Ovary (tissue), 10 donors: ENCODE measurements at regions of chr11 and their contacts with region 1.

Region 1: DNA sequence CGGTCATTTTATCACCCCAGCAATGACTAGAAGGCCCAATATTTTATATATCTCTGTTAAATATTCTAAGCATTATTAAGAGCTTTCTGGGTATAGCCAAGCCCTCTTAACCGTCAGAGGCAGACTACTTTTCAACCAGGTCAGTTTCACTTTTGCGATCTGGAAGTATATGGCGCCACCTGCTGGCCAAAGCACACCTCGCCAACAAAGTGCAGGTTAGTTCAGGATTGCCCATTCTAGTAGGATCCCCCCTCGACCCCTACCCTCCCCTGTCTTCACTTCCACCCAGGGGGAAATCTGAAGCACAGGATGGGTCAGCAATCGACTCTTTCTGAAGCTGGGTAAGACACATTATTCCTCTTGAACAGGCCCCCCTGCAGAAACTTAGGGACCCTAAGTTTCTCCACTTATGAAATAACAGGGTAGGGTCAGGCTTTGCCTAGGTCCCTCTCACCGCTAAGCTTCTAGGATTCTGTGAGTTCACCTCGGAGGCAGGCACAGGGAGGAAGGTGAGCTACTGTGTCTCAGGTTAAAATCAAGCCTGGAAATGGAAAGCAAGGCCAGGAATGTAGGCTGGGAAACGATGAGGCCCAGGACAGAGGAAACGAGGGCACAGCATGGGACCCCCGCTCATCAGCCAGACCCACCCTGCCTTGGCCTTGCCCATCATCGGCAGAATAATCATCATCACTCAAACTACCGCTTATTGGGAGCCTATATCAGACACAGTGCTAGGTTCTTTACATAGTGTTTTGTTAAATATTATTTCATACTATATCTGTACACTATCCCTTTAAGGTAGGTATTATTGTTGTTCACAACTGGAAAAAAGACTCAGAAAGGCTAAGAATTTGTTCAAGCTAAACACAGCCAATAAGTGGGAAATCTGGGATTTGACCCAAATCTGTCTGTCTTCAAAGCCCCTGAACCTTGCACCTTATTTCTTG is 35.6 kb downstream of the KCNJ1 start:
- DNase-seq: peak; percentile 67 to 87 (median 85)
- H3K4me3 ChIP-seq: no peak overlapping the region
- H3K27ac ChIP-seq: no peak overlapping the region
- H3K4me1 ChIP-seq: peaks cover 3% of the 10 kb centered on the region
- H3K27me3 ChIP-seq: no peaks in the 10 kb centered on the region
- CTCF ChIP-seq: peak; percentile 64 to 73 (median 68)
- EP300 ChIP-seq: no peak
- POLR2A ChIP-seq: no peak

Region 2: GRCh38 chr11:128039140-128040021 is 792.1 kb before region 1 on chr11:
- intact Hi-C with region 1: loop called in 1 of 4 experiments (anchors 5 kb)
- DNase-seq: no peak
- H3K4me3 ChIP-seq: no peak overlapping the region
- H3K27ac ChIP-seq: no peak overlapping the region
- H3K4me1 ChIP-seq: no peaks in the 10 kb centered on the region
- H3K27me3 ChIP-seq: no peaks in the 10 kb centered on the region
- CTCF ChIP-seq: no peak
- EP300 ChIP-seq: no peak
- POLR2A ChIP-seq: no peak

Region 3: GRCh38 chr11:128146926-128147605 is 684.4 kb before region 1 on chr11:
- intact Hi-C with region 1: no loop called
- DNase-seq: no peak
- H3K4me3 ChIP-seq: no peak overlapping the region
- H3K27ac ChIP-seq: no peak overlapping the region
- H3K4me1 ChIP-seq: no peaks in the 10 kb centered on the region
- H3K27me3 ChIP-seq: no peaks in the 10 kb centered on the region
- CTCF ChIP-seq: no peak
- EP300 ChIP-seq: no peak
- POLR2A ChIP-seq: no peak

Region 4: GRCh38 chr11:128157423-128158298 is 673.8 kb before region 1 on chr11:
- intact Hi-C with region 1: loop called in 1 of 4 experiments (anchors 5 kb)
- DNase-seq: peak in 2 of 5 donors; percentile 19 to 43
- H3K4me3 ChIP-seq: no peak overlapping the region
- H3K27ac ChIP-seq: no peak overlapping the region
- H3K4me1 ChIP-seq: no peaks in the 10 kb centered on the region
- H3K27me3 ChIP-seq: no peaks in the 10 kb centered on the region
- CTCF ChIP-seq: peak; percentile 64 to 80 (median 64)
- EP300 ChIP-seq: no peak
- POLR2A ChIP-seq: no peak

Region 5: GRCh38 chr11:128165572-128165971 is 665.9 kb before region 1 on chr11:
- intact Hi-C with region 1: loop called in 3 of 4 experiments (anchors 5 to 10 kb)
- DNase-seq: no peak
- H3K4me3 ChIP-seq: no peak overlapping the region
- H3K27ac ChIP-seq: no peak overlapping the region
- H3K4me1 ChIP-seq: no peaks in the 10 kb centered on the region
- H3K27me3 ChIP-seq: no peaks in the 10 kb centered on the region
- CTCF ChIP-seq: no peak
- EP300 ChIP-seq: no peak
- POLR2A ChIP-seq: no peak

Region 6: GRCh38 chr11:128172046-128172878 is 659.2 kb before region 1 on chr11:
- intact Hi-C with region 1: loop called in 3 of 4 experiments (anchors 5 to 10 kb)
- DNase-seq: peak; percentile 68 to 87 (median 84)
- H3K4me3 ChIP-seq: no peak overlapping the region
- H3K27ac ChIP-seq: no peak overlapping the region
- H3K4me1 ChIP-seq: no peaks in the 10 kb centered on the region
- H3K27me3 ChIP-seq: no peaks in the 10 kb centered on the region
- CTCF ChIP-seq: peak; percentile 59 to 79 (median 72)
- EP300 ChIP-seq: no peak
- POLR2A ChIP-seq: no peak

Region 7: DNA sequence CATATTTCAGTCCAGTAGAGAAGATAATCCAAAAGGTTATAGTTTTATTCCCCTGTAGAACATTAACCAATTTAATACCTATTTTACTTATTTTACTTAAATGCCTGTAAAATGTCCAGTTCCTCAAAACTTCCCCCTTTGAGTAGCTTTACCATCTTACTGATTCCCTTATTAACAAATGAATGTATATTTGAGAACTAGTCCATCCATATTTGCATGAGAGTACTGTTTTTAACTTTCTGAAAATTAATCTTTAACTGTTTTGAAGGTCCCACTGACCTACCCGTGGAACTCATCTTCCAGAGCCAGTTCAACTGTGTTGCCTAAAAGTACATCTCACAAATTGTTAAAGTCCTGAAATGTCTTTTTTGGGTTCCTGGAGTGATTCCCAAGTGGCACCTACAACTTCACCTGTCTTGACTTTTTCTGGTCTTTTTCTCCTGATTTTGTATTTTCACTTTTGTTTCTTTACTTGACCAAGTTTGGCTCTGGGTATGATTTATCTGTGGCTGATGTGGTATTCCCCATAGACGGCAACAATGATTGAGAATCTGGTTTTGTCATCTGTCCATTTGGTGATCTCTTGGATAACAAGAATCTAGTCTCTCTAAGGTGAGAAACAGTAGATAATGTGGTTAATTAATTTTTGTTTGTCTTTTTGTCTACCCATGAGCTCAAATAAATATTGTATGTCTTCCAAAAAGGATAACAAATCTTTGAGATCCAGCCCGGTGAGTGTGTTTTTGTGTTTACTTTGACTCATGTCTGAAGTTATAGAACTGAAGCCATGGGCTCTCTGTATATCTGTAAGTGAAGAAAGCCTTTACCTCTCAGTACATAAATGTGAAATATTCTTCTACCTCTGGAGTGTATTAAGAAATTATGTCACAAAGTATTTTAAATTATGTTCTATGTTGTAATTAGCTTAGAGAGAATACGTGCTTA is 418.3 kb before region 1 on chr11:
- intact Hi-C with region 1: no loop called
- DNase-seq: no peak
- H3K4me3 ChIP-seq: no peak overlapping the region
- H3K27ac ChIP-seq: no peak overlapping the region
- H3K4me1 ChIP-seq: peaks cover 2% of the 10 kb centered on the region
- H3K27me3 ChIP-seq: no peaks in the 10 kb centered on the region
- CTCF ChIP-seq: no peak
- EP300 ChIP-seq: no peak
- POLR2A ChIP-seq: no peak

Region 8: DNA sequence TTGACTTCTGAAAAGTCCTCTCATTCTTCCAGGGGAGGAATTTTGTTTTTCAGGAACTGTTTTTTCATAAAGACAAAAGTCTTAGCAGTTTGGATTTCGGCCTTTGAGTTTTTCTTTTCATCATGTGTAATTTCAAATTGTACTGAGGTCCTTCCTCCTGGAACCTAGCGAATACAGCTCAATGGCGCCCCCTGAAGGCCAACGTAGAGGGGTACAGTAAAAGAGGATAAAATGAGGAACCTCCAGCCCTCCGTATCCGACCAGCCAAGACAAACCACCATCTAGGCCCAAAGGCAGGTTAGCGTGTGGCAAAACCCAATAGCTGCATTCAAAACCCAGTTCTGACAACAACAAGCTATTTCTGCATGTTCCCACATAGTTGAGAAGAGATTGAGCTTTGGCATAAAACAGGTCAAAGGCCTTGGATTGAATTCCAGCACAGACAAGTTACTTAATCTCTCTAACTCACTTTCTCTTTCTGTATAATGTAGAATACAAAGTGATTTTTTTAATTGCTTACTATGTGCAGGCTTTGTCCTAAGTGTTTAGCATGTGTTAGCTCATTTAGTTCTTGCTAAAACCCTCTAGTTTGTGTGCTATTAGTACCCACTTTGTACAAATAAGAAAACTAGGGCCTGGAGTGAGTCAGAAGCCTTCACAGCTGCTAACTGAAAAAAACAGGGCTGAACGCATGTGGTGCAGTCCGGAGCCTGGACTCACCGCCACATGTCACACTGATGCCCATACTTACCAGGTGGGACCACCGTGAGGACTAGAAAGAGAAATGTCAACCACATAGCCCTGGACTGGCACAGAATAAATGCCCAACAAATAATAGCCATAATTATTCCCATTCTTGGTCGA is 200.8 kb before region 1 on chr11:
- intact Hi-C with region 1: loop called in 2 of 4 experiments (anchors 10 kb)
- DNase-seq: peak; percentile 85 to 94 (median 91)
- H3K4me3 ChIP-seq: no peak overlapping the region
- H3K27ac ChIP-seq: peak overlapping the region in 1 of 2 donors; percentile 24
- H3K4me1 ChIP-seq: no peaks in the 10 kb centered on the region
- H3K27me3 ChIP-seq: no peaks in the 10 kb centered on the region
- CTCF ChIP-seq: peak; percentile 65 to 91 (median 82)
- EP300 ChIP-seq: no peak
- POLR2A ChIP-seq: no peak

Region 9: GRCh38 chr11:129041611-129042018 is 210.2 kb after region 1 on chr11:
- intact Hi-C with region 1: no loop called
- DNase-seq: no peak
- H3K4me3 ChIP-seq: no peak overlapping the region
- H3K27ac ChIP-seq: no peak overlapping the region
- H3K4me1 ChIP-seq: no peaks in the 10 kb centered on the region
- H3K27me3 ChIP-seq: no peaks in the 10 kb centered on the region
- CTCF ChIP-seq: no peak
- EP300 ChIP-seq: no peak
- POLR2A ChIP-seq: no peak